ENCODE measurements at regions of chr17 and their contacts with region 1.

Region 1: DNA sequence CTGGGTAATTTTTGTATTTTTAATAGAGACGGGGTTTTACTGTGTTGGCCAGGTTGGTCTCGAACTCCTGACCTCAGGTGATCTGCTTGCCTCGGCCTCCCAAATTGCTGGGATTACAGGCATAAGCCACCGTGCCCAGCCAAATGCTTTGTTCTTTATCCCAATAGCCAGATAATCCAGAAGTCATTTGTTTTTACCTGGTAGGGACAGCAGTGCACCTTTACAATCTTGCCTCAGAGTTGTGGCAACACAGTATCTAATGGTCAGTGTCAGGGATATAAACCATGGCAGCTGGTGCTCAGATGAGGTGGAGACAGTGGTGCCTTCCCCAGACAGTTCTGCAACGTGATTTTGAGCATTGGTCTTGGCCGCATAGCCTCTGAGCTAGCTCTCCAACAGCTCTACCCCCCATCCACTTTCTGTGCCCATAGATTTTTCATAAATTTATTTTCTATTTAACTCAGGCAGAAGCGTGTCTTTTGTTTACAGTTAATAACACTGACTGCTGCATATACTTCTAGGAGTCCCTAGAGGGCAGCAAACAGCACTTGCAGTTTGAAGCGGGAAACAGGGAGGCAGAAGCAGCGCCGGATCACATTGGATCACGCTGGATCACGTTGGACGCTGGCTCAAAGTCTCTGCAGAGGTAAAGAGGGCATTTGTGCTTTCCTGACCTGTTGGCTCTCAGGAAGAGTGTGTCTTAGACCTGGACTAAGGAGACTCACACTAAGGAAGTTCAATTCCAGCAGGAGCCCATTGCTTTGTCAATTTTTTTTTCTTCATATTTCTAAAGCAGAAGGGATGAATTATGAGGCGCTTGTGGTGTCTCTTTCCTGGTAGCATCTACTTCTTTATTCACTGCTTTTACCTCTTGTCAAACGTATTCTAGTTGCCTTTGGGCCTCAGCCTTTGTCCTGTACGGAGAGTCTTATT is 5.1 kb upstream of the GGT6 start:
- DNase-seq: peak; percentile 92
- ATAC-seq: peak; percentile 90 to 92
- H3K4me3 ChIP-seq: no peak overlapping the region
- H3K27ac ChIP-seq: peak overlapping the region in 1 of 2 experiments; percentile 25; a peak in 1 of 6 replicates
- H3K4me1 ChIP-seq: 0 out of 3 replicates have a peak, but pooled peaks cover 4% of the 10 kb centered on the region
- CTCF ChIP-seq: peak; percentile 96
- EP300 ChIP-seq: no peak
- POLR2A ChIP-seq: no peak
- RAD21 ChIP-seq: peak; percentile 51 to 68

Region 2: GRCh38 chr17:4327638-4328037 is 237.8 kb before region 1 on chr17:
- CTCF ChIA-PET with region 1: no interaction called
- POLR2A ChIA-PET with region 1: no interaction called
- DNase-seq: peak; percentile 73 to 86
- ATAC-seq: peak; percentile 88 to 91
- H3K4me3 ChIP-seq: no peak overlapping the region
- H3K27ac ChIP-seq: peak overlapping the region; percentile 52 to 76
- H3K4me1 ChIP-seq: peaks cover 64% of the 10 kb centered on the region
- CTCF ChIP-seq: no peak
- EP300 ChIP-seq: peak in 1 of 2 experiments; percentile 22; a peak in 1 of 5 replicates
- POLR2A ChIP-seq: no peak
- RAD21 ChIP-seq: no peak

Region 3: DNA sequence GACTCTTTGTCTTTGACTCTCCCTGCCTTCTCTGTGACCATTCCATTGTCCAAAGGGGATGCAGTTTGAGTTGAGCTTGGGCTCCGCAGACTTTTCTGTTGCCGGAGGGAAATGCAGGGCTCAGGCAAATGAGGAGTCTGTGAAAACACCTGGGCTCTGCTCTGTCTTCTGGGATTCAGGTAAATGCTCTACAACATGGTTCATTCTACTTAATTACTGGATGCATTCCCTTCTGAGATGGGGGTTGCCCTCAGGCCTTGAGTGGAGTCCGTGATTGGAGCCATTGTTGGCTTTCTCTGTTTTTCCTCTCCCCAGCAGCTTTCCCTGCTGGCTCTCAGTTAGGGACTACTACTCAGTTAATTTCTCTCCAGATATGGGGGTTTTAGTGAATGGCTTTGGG is 93.2 kb before region 1 on chr17:
- CTCF ChIA-PET with region 1: no interaction called
- POLR2A ChIA-PET with region 1: no interaction called
- DNase-seq: no peak
- ATAC-seq: no peak
- H3K4me3 ChIP-seq: no peak overlapping the region
- H3K27ac ChIP-seq: no peak overlapping the region
- H3K4me1 ChIP-seq: no peaks in the 10 kb centered on the region
- CTCF ChIP-seq: no peak
- EP300 ChIP-seq: no peak
- POLR2A ChIP-seq: no peak
- RAD21 ChIP-seq: no peak

Region 4: GRCh38 chr17:4554997-4555799 is 10.3 kb before region 1 on chr17 and contains the start of gene MYBBP1A:
- CTCF ChIA-PET with region 1: interaction called, 99 read pairs
- POLR2A ChIA-PET with region 1: interaction called, 8 read pairs
- DNase-seq: peak; percentile 97 to 100
- ATAC-seq: peak; percentile 92 to 97
- H3K4me3 ChIP-seq: peak within 1 kb of the TSS; percentile 92
- H3K27ac ChIP-seq: peak within 1 kb of the TSS; percentile 84 to 89
- H3K4me1 ChIP-seq: peaks cover 16% of the 10 kb centered on the region
- CTCF ChIP-seq: no peak
- EP300 ChIP-seq: no peak
- POLR2A ChIP-seq: peak; percentile 91
- RAD21 ChIP-seq: no peak
- polyA plus RNA-seq, gene MYBBP1A: 39.7 and 42.9 TPM in 2 replicates

Region 5: DNA sequence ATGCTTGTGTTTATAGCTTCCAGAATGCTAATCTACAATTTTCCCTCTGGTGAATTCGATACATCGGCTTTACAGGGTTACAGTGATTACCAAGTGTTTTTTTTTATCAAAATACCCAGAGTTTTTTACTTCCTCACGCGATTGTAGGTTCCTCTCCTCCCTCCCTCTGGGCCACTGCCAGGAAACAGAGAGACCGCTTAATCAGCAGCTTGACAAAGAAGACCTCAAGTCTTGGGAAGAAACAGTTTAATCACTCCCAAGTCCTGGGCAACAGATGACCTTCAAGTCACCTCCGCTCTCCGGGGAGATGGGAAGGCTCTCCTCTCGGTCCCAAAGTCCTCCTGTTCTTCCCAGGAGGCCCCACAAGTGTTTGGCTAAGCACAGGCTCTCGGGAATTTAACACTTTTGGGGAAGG is 42.3 kb after region 1 on chr17:
- CTCF ChIA-PET with region 1: interaction called, 186 read pairs
- POLR2A ChIA-PET with region 1: no interaction called
- DNase-seq: no peak
- ATAC-seq: no peak
- H3K4me3 ChIP-seq: no peak overlapping the region
- H3K27ac ChIP-seq: no peak overlapping the region
- H3K4me1 ChIP-seq: no peaks in the 10 kb centered on the region
- CTCF ChIP-seq: no peak
- EP300 ChIP-seq: no peak
- POLR2A ChIP-seq: no peak
- RAD21 ChIP-seq: no peak

Region 6: DNA sequence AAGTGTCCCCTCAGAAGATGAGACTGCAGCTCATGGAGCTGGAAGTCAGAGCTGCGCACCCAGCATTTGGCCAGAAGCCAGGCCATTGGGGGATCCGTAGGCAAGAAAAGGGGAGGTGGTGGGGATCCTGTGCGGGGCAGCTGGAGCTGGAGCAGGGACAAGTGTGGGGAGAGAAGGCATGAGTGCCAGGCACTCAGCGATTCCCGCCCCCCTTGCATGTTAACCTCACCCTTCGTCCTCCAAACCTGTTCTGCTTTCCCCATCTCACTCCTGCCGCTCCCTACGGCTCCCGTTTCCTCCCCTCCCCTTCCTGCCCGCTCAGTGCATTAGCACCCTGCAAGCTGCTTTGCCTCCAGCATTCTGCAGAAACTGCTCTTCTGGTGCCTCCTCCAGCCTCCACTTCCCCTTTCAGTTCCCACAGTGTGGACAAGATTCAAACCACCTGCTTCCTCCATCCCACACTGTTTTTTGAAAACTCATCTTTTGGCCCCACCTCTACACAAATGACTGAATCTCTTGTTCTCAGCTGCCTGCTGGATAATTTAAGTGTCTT is 70.4 kb after region 1 on chr17:
- CTCF ChIA-PET with region 1: interaction called, 78 read pairs
- POLR2A ChIA-PET with region 1: no interaction called
- DNase-seq: no peak
- ATAC-seq: no peak
- H3K4me3 ChIP-seq: no peak overlapping the region
- H3K27ac ChIP-seq: no peak overlapping the region
- H3K4me1 ChIP-seq: 0 out of 3 replicates have a peak, but pooled peaks cover 3% of the 10 kb centered on the region
- CTCF ChIP-seq: no peak
- EP300 ChIP-seq: no peak
- POLR2A ChIP-seq: no peak
- RAD21 ChIP-seq: no peak

Region 7: GRCh38 chr17:4703330-4703691 is 137.8 kb after region 1 on chr17:
- CTCF ChIA-PET with region 1: interaction called, 29 read pairs
- POLR2A ChIA-PET with region 1: interaction called, 3 read pairs
- DNase-seq: no peak
- ATAC-seq: no peak
- H3K4me3 ChIP-seq: peak overlapping the region; percentile 93
- H3K27ac ChIP-seq: peak overlapping the region; percentile 91 to 95
- H3K4me1 ChIP-seq: peaks cover 32% of the 10 kb centered on the region
- CTCF ChIP-seq: no peak
- EP300 ChIP-seq: no peak
- POLR2A ChIP-seq: no peak
- RAD21 ChIP-seq: no peak